Activated CD4-positive, alpha-beta T cell treated with anti-CD3 and anti-CD28 coated beads, Interleukin-2, amount 10 ng/mL, durations not matched to agents 24 days and 14 days (primary cell): ENCODE measurements at regions of chr11 and their contacts with region 1.

Region 1: DNA sequence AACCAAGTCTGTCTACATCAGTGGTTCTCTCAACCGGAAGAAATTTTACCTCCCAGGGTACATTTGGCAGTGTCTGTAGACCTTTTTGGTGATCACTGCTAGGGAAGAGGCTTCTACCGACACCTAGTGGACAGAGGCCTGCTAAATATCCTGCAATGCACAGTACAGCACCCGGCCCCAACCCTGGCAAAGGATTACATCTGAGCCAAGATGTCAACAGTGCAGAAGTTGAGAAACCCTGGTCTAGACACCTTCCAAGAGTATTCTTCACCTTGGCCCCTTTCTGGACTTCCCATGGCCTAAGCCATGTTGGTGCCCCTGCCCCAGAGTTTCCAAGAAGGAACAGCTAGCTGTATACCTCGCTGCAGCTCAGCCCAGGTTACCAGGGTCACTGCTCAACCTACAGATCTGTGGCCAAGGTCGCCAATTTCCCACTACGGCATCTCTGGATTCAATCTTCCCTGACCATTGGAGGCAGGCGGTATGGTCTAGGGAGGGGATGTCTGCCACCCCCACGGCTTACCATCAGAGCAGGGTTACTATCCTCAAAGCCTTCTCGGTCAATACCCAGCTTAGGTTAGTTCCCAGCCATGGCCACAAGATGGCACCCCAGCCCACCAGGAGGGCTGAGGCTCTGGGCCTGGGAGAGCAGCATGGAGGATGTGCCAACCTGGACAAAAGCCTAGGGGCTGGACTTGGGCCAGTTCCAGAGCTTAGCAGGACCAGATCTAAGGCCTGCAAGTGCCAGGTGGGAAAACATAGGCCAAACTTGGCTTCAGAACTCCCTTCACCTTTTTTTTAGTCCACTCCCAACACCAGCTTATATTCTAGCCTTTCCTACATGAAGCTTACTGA is 3.7 kb upstream of the KCNC1 start:
- DNase-seq: peak; percentile 90
- H3K4me3 Mint-ChIP-seq: no peak overlapping the region
- H3K27ac Mint-ChIP-seq: no peak overlapping the region
- H3K4me1 Mint-ChIP-seq: peaks cover 4% of the 10 kb centered on the region
- H3K27me3 Mint-ChIP-seq: peaks cover 51% of the 10 kb centered on the region

Region 2: GRCh38 chr11:17384002-17384511 is 346.8 kb before region 1 on chr11:
- intact Hi-C with region 1: loop called (anchors 10 kb)
- DNase-seq: peak; percentile 92
- H3K4me3 Mint-ChIP-seq: no peak overlapping the region
- H3K27ac Mint-ChIP-seq: no peak overlapping the region
- H3K4me1 Mint-ChIP-seq: peaks cover 3% of the 10 kb centered on the region
- H3K27me3 Mint-ChIP-seq: peaks cover 11% of the 10 kb centered on the region

Region 3: GRCh38 chr11:17598700-17599459 is 132.0 kb before region 1 on chr11:
- intact Hi-C with region 1: loop called (anchors 1 kb)
- DNase-seq: peak; percentile 90
- H3K4me3 Mint-ChIP-seq: no peak overlapping the region
- H3K27ac Mint-ChIP-seq: no peak overlapping the region
- H3K4me1 Mint-ChIP-seq: peaks cover 8% of the 10 kb centered on the region
- H3K27me3 Mint-ChIP-seq: no peaks in the 10 kb centered on the region

Region 4: DNA sequence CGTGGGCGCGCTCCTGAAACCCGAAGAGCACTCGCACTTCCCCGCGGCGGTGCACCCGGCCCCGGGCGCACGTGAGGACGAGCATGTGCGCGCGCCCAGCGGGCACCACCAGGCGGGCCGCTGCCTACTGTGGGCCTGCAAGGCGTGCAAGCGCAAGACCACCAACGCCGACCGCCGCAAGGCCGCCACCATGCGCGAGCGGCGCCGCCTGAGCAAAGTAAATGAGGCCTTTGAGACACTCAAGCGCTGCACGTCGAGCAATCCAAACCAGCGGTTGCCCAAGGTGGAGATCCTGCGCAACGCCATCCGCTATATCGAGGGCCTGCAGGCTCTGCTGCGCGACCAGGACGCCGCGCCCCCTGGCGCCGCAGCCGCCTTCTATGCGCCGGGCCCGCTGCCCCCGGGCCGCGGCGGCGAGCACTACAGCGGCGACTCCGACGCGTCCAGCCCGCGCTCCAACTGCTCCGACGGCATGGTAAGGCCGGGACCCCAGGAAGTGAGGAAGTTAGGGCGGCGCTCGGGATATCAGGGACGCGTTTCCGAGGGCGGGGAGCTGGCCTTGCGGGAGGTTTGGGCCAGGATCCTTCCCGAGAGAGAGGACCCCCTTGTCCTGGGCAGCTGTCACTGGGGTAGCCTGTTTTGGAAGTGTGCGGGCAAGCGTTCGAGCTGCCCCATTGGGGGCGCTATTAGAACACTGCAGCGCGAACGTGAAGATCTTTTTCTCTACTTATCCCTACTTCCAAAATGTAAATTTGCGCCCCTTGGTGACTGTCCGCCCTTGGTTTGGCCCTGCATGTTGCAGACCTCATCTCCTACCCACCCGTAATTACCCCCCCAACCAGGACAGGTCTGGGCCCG is 10.7 kb before region 1 on chr11:
- intact Hi-C with region 1: no loop called
- DNase-seq: no peak
- H3K4me3 Mint-ChIP-seq: no peak overlapping the region
- H3K27ac Mint-ChIP-seq: no peak overlapping the region
- H3K4me1 Mint-ChIP-seq: no peaks in the 10 kb centered on the region
- H3K27me3 Mint-ChIP-seq: peaks cover 46% of the 10 kb centered on the region

Region 5: DNA sequence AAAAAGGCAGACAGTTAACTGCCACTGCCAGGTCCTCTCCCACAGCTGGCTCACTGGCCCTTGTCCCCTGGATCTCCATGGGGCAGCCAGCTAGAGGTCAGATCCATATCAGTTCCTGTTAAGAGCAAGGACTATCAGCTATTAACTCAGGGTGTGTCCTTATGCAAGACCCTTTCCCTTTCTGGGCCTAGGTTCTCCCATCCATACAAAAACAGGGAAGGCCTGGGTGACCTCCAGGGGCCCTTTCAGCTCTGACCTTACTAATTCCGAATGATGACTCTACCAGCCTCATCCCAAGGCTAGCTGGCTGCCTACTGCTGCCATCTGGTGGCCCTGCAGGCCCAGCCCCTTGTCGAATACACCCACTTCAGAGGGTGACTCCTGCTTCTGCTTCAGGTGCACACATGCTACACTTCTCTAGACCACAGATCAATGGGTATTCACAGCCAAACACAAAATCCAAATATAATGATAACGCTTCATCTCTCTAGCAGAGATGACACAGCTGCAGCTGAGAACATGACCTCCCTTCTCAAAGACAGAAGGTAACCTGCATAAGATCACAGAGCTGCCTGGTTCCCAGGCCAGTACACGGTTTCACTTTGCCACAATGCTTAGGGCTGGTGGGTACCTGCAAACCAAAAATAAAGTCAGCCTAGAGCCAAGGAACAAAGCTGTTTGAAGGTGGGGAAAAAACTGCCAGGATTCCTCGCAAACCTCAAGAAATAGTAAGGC is 247.9 kb after region 1 on chr11:
- intact Hi-C with region 1: loop called (anchors 1 kb)
- DNase-seq: peak; percentile 71
- H3K4me3 Mint-ChIP-seq: no peak overlapping the region
- H3K27ac Mint-ChIP-seq: no peak overlapping the region
- H3K4me1 Mint-ChIP-seq: no peaks in the 10 kb centered on the region
- H3K27me3 Mint-ChIP-seq: no peaks in the 10 kb centered on the region